Caco-2 (cell line): ENCODE measurements at regions of chr3 and their contacts with region 1.

Region 1: DNA sequence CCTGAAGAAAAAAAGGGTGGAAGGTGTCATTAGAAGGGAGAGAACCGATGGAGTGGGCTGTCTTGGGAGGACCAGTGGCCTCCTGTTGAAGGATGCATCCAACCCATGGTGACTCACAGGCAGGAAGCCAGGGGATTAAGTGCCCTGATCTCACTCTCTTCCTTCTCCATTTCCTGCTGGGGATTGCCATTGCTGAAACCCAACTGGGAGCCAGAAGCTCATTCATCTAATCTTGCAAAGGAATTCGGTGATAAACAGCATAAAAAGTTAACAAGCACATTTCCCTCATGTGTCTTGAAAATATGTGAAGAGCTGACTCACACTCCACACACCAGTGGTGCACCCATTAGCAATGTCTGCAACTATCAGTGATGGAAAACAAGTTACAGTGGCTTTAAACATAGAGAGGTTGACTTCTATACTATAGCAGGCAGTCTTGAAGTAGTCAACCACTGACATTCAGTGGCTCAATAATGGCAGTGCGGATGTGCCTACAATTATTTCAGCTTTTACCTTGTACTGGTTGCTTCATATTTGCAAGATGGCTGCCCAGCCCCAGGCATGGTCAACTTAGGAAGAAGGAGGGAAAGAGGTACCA is 12.8 kb upstream of the CSRNP1 start:
- DNase-seq: no peak
- H3K4me3 ChIP-seq: no peak overlapping the region
- H3K4me3 Mint-ChIP-seq: no peak overlapping the region
- H3K27ac Mint-ChIP-seq: no peak overlapping the region
- H3K4me1 ChIP-seq: peaks cover 5% of the 10 kb centered on the region; the same call in 1 of the 2 replicates
- H3K4me1 Mint-ChIP-seq: no peaks in the 10 kb centered on the region
- H3K27me3 ChIP-seq: no peaks in the 10 kb centered on the region
- H3K27me3 Mint-ChIP-seq: no peaks in the 10 kb centered on the region
- CTCF ChIP-seq: no peak

Region 2: DNA sequence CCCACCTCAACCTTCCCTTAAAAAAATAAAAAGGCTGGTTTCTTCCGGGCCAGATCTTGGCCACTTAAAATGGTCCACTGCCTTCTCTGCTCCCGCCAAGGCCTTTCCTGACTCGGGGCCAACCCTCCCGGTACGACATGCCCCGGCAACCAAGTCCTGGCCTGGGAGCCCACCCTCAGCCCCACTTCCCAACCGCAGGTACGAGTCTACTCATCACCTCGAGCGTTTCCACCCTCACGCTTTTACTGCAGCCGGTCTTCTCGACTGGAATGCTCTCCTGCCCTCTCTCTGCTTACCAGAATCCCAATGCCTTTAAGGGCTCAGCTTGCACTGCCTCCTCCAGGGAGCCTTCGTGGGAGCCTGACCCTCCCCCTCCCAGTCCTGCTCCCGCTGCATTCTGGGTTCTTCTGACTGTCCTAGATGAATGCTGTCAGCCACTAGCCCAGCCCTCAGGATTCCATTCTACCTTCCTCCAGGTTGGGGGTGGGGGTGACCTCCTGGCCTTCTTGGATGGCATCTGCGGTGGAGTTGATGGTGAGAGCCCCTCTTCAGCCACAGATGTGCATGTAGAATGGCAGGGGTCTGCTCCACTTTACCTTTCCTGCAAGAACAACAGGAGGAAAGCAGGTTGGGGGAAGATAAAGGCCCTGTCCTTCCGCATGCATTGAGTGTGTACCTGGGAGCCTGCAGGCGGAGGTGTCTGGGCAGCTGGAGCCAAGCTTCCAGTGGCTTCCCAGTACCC is 11.8 kb before region 1 on chr3:
- CTCF ChIA-PET with region 1: no interaction called
- POLR2A ChIA-PET with region 1: no interaction called
- intact Hi-C with region 1: loop called (anchors 2 kb)
- DNase-seq: peak; percentile 75 to 82
- H3K4me3 ChIP-seq: peak overlapping the region; percentile 40
- H3K4me3 Mint-ChIP-seq: peak overlapping the region; percentile 94
- H3K27ac Mint-ChIP-seq: peak overlapping the region; percentile 97
- H3K4me1 ChIP-seq: peaks cover 40% of the 10 kb centered on the region
- H3K4me1 Mint-ChIP-seq: peaks cover 36% of the 10 kb centered on the region
- H3K27me3 ChIP-seq: no peaks in the 10 kb centered on the region
- H3K27me3 Mint-ChIP-seq: no peaks in the 10 kb centered on the region
- CTCF ChIP-seq: no peak

Region 3: GRCh38 chr3:39180546-39181346 is 14.5 kb after region 1 on chr3:
- CTCF ChIA-PET with region 1: no interaction called
- POLR2A ChIA-PET with region 1: no interaction called
- intact Hi-C with region 1: no loop called
- DNase-seq: peak; percentile 89 to 94
- H3K4me3 ChIP-seq: peak overlapping the region; percentile 37
- H3K4me3 Mint-ChIP-seq: peak overlapping the region; percentile 88
- H3K27ac Mint-ChIP-seq: peak overlapping the region; percentile 97
- H3K4me1 ChIP-seq: peaks cover 24% of the 10 kb centered on the region
- H3K4me1 Mint-ChIP-seq: peaks cover 33% of the 10 kb centered on the region
- H3K27me3 ChIP-seq: no peaks in the 10 kb centered on the region
- H3K27me3 Mint-ChIP-seq: no peaks in the 10 kb centered on the region
- CTCF ChIP-seq: no peak

Region 4: GRCh38 chr3:39216176-39216790 is 50.0 kb after region 1 on chr3:
- CTCF ChIA-PET with region 1: no interaction called
- POLR2A ChIA-PET with region 1: no interaction called
- intact Hi-C with region 1: no loop called
- DNase-seq: no peak
- H3K4me3 ChIP-seq: no peak overlapping the region
- H3K4me3 Mint-ChIP-seq: no peak overlapping the region
- H3K27ac Mint-ChIP-seq: no peak overlapping the region
- H3K4me1 ChIP-seq: no peaks in the 10 kb centered on the region
- H3K4me1 Mint-ChIP-seq: no peaks in the 10 kb centered on the region
- H3K27me3 ChIP-seq: no peaks in the 10 kb centered on the region
- H3K27me3 Mint-ChIP-seq: peaks cover 16% of the 10 kb centered on the region
- CTCF ChIP-seq: no peak